ENCODE measurements at regions of chr17 and their contacts with region 1.

Region 1: GRCh38 chr17:57662644-57663308 is 82.3 kb downstream of the CCDC182 start:
- DNase-seq: no peak
- ATAC-seq: peak; percentile 94
- H3K4me3 ChIP-seq: peak overlapping the region; percentile 25 to 44
- H3K27ac ChIP-seq: no peak overlapping the region
- H3K4me1 ChIP-seq: no peaks in the 10 kb centered on the region
- H3K27me3 ChIP-seq: no peaks in the 10 kb centered on the region
- CTCF ChIP-seq: no peak

Region 2: GRCh38 chr17:57649731-57650484 is 12.9 kb before region 1 on chr17:
- CTCF ChIA-PET with region 1: no interaction called
- POLR2A ChIA-PET with region 1: no interaction called
- in situ Hi-C with region 1: no loop called
- intact Hi-C with region 1: no loop called
- DNase-seq: no peak
- ATAC-seq: no peak
- H3K4me3 ChIP-seq: no peak overlapping the region
- H3K27ac ChIP-seq: no peak overlapping the region
- H3K4me1 ChIP-seq: no peaks in the 10 kb centered on the region
- H3K27me3 ChIP-seq: no peaks in the 10 kb centered on the region
- CTCF ChIP-seq: no peak

Region 3: GRCh38 chr17:58082870-58083490 is 420.2 kb after region 1 on chr17 and contains the start of gene DYNLL2:
- CTCF ChIA-PET with region 1: interaction called, 11 read pairs
- POLR2A ChIA-PET with region 1: no interaction called
- in situ Hi-C with region 1: no loop called
- intact Hi-C with region 1: no loop called
- DNase-seq: peak; percentile 4
- ATAC-seq: peak; percentile 93
- H3K4me3 ChIP-seq: peak within 1 kb of the TSS; percentile 77 to 87
- H3K27ac ChIP-seq: peak within 1 kb of the TSS; percentile 96
- H3K4me1 ChIP-seq: peaks cover 16% of the 10 kb centered on the region
- H3K27me3 ChIP-seq: peaks cover 9% of the 10 kb centered on the region
- CTCF ChIP-seq: no peak
- total RNA-seq, gene DYNLL2: 19.8 TPM